Activated CD4-positive, alpha-beta T cell treated with anti-CD3 and anti-CD28 coated beads, Interleukin-2, amount 10 ng/mL, durations not matched to agents 7 days and 5 days (primary cell): ENCODE measurements at regions of chr5 and their contacts with region 1.

Region 1: GRCh38 chr5:177592010-177592834 is at the start of gene TMED9:
- DNase-seq: peak; percentile 89
- H3K4me3 Mint-ChIP-seq: peak within 1 kb of the TSS; percentile 97
- H3K27ac Mint-ChIP-seq: peak within 1 kb of the TSS; percentile 97
- H3K4me1 Mint-ChIP-seq: peaks cover 22% of the 10 kb centered on the region
- H3K27me3 Mint-ChIP-seq: peaks cover 26% of the 10 kb centered on the region
- total RNA-seq, gene TMED9: 94.0 to 105 TPM

Region 2: GRCh38 chr5:177607452-177608192 is 15.4 kb after region 1 on chr5:
- CTCF ChIA-PET with region 1: interaction called, 13 read pairs
- POLR2A ChIA-PET with region 1: no interaction called
- DNase-seq: peak; percentile 67
- H3K4me3 Mint-ChIP-seq: no peak overlapping the region
- H3K27ac Mint-ChIP-seq: peak overlapping the region; percentile 41
- H3K4me1 Mint-ChIP-seq: peaks cover 10% of the 10 kb centered on the region
- H3K27me3 Mint-ChIP-seq: no peaks in the 10 kb centered on the region